H1 (cell line): ENCODE measurements at regions of chr18 and their contacts with region 1.

Region 1: GRCh38 chr18:70442933-70443332 is 154.1 kb downstream of the SOCS6 start:
- DNase-seq: no peak
- H3K4me3 ChIP-seq: no peak overlapping the region
- H3K27ac ChIP-seq: 0 out of 2 replicates have a peak overlapping the region, but pooled peaks have one; percentile 31
- H3K4me1 ChIP-seq: peaks cover 0 to 8% (median 0%) of the 10 kb centered on the region in 4 experiments; a peak in 1 of 7 replicates
- H3K27me3 ChIP-seq: no peaks in the 10 kb centered on the region
- CTCF ChIP-seq: no peak
- EP300 ChIP-seq: no peak
- POLR2A ChIP-seq: no peak
- RAD21 ChIP-seq: no peak

Region 2: DNA sequence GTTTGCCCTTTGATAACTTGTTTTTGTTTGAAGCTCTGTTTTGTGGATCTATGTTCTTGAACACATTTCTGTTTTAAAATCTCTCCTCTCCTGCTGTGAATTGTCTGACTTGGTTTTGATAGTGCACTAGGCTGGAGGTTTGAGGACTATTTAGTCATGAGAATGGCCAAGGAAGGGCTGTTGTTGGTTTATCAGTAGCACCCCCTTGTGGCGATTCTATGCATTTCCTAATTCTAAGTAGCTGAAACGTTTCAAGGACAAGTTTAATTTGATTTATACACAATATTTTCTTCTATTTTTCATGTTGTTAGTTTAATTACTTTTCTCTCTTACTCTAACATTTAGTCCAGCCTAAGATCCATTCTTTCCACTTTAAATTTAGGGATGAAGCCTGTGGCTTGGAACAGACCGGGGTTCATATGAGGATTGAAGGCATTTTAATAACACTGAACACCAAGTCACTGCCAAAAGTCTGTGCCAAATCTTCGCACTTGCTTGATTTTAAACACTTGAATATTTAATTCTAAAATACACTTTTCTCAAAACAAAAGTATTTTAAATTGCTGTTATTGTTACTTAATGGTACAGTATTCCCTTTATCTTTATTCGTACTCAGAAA is 11.9 kb after region 1 on chr18:
- CTCF ChIA-PET with region 1: interaction called, 20 read pairs
- POLR2A ChIA-PET with region 1: no interaction called
- DNase-seq: no peak
- H3K4me3 ChIP-seq: no peak overlapping the region
- H3K27ac ChIP-seq: no peak overlapping the region
- H3K4me1 ChIP-seq: peaks cover 0 to 11% (median 0%) of the 10 kb centered on the region in 4 experiments; a peak in 2 of 7 replicates
- H3K27me3 ChIP-seq: no peaks in the 10 kb centered on the region
- CTCF ChIP-seq: peak in 2 of 3 experiments; percentile 56 to 72; a peak in 3 of 4 replicates
- EP300 ChIP-seq: no peak
- POLR2A ChIP-seq: no peak
- RAD21 ChIP-seq: peak; percentile 72 to 73